ENCODE measurements at regions of chr1 and their contacts with region 1.

Region 1: DNA sequence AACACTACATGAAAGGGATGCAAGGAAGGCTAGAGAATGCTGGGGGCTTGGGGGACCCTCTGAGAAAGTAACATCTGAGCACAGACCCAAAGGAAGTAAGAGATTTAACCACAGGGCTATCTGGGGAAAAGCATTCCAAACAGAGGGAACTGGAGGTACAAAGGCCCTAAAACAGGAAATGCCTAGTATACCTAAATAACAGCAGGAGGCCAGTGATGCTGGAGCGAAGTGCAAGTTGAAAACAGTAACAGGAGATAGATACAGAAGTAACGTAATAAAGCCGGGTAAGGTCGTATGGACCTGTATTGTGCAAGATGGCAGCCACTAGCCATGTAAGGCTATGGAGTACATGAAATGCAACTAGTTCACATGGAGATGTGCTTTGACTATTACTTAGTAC is 52.1 kb downstream of the CD34 start:
- H3K4me3 ChIP-seq: no peak overlapping the region
- H3K27ac ChIP-seq: no peak overlapping the region
- H3K4me1 ChIP-seq: no peaks in the 10 kb centered on the region
- CTCF ChIP-seq: no peak

Region 2: GRCh38 chr1:207787776-207788175 is 71.0 kb before region 1 on chr1:
- CTCF ChIA-PET with region 1: no interaction called
- POLR2A ChIA-PET with region 1: no interaction called
- H3K4me3 ChIP-seq: no peak overlapping the region
- H3K27ac ChIP-seq: no peak overlapping the region
- H3K4me1 ChIP-seq: no peaks in the 10 kb centered on the region
- CTCF ChIP-seq: no peak

Region 3: GRCh38 chr1:207868774-207869721 is 10.2 kb after region 1 on chr1:
- CTCF ChIA-PET with region 1: interaction called, 20 read pairs
- POLR2A ChIA-PET with region 1: interaction called, 6 read pairs
- H3K4me3 ChIP-seq: peak overlapping the region; percentile 71
- H3K27ac ChIP-seq: peak overlapping the region; percentile 74; the same call in 1 of the 2 replicates
- H3K4me1 ChIP-seq: 0 out of 2 replicates have a peak, but pooled peaks cover 2% of the 10 kb centered on the region
- CTCF ChIP-seq: 0 out of 2 replicates have a peak, but pooled peaks have one; percentile 11

Region 4: GRCh38 chr1:208445758-208446203 is 587.0 kb after region 1 on chr1:
- CTCF ChIA-PET with region 1: no interaction called
- POLR2A ChIA-PET with region 1: no interaction called
- H3K4me3 ChIP-seq: no peak overlapping the region
- H3K27ac ChIP-seq: no peak overlapping the region; the same call in 1 of the 2 replicates
- H3K4me1 ChIP-seq: no peaks in the 10 kb centered on the region
- CTCF ChIP-seq: no peak

Measured in HEK293 (cell line).